ENCODE measurements at regions of chr3 and their contacts with region 1.

Region 1: DNA sequence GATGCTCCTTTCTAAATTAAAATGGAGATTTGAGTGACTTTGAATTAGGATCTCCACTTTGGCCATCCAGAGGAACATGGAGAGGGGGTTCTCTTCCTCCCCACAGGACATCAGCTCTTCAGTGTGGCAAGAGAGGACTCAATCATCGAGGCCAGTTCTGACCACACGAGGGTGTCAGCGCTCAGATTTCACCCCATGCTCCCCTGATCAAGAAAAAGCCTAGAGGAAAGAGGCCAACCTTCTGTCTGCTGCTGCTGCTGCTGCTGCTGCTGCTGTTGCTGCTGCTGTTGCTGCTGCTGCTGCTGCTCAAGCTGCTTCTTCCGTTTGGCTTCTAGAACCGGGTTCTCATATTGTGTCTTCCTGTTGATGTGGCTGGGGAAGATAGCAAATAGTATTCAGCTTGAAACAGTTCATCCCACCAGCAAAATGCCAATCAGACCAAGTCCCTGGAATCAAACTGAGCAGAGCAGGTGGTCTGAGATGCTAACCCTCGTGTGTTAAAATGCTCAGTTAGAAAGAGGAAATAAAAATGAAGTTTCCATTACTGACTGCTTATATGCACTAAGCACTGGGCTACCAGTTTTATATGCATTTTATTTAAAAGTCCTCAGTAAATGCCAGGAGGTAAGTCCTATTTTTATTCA is 599.0 kb downstream of the MAGI1 start:
- DNase-seq: peak in 4 of 5 donors; percentile 72 to 88 (median 81)
- H3K4me3 ChIP-seq: no peak overlapping the region
- H3K27ac ChIP-seq: no peak overlapping the region
- H3K4me1 ChIP-seq: no peaks in the 10 kb centered on the region
- H3K27me3 ChIP-seq: no peaks in the 10 kb centered on the region
- CTCF ChIP-seq: peak; percentile 68

Region 2: DNA sequence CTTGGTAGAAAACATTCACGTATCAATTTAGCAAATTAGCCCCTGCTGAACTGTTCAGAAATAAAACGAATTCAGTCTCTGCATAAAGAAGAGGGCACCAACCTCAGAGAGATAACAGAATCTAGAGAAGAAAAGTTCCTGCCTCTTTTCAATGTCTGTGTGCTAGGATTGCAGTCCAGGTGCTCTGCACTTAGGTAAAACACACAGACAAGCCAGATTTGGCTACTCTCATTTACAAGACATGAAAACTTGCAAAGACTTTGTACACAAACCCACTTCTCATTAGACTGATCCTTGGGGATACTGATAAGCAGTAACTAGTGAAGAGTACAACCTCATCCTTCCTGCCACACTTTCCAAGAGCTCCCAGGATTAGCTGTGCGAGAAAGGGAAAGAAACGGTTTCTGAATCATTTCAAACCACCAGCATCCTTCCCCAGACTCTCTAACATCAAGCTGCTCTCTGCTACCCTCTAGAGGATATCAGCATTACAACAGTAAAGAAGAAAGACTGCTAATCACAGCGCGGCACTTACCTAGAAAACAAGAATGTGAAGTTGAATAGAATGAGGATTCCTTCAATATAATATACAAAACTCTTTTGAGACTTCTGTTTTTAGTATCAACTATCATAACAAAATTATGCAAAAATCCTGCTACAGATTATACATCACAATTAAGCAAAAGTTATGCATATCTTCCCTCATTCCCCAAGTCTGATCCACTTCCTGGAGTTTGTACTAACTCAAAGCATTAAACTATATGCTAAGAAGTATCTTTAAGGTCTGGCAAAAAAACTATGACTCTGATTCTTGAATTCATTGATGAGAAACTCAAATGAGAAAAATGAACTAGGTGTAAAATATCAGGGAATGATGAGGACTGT is 292.5 kb after region 1 on chr3:
- intact Hi-C with region 1: loop called (anchors 10 kb)
- DNase-seq: peak in 3 of 5 donors; percentile 24 to 92 (median 89)
- H3K4me3 ChIP-seq: no peak overlapping the region
- H3K27ac ChIP-seq: no peak overlapping the region
- H3K4me1 ChIP-seq: peaks cover 0 to 7% (median 6%) of the 10 kb centered on the region in 3 donors
- H3K27me3 ChIP-seq: no peaks in the 10 kb centered on the region
- CTCF ChIP-seq: peak; percentile 74

Measured in kidney (tissue), 22 donors.